Aorta (tissue), 5 donors: ENCODE measurements at regions of chr5 and their contacts with region 1.

Region 1: DNA sequence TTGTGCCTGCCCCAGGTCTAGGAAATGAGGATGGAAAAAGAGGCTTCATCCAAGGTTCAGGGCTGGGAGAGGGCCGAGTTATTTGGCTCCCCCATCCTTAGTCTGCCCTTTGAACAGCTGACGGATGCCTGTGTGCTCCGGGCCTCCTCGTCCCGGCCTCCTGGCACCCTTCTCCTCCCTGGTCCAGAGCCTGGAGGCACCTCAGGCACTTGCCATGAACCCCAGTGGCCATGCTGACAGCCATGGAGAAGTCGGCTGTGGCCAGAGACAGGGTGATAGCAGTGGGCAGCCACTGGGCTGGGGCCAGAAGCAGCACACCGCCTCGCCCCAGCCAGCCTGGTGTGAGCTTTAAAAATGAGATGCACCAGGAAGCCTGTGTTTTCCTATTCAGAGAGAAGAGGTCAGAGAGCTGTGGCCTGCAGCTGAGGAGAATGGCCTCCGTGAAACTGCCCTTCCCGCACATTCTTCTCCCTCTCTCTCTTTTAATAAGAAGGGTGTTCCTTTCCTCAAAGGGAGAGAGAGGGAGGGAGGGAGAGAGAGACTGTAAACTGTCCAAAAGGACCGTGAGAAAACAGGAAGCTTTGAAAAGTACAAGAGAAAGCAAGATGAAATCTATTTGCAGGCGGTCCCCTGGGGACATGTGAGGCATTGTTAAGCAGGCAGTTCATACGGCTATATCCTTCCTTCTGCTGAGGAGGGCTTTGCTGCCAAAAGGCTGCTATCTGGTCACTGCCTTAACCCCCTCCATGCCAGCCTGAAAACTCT is 55.3 kb downstream of the ZNF366 start:
- DNase-seq: peak; percentile 86 to 87
- ATAC-seq: peak; percentile 88
- H3K4me3 ChIP-seq: no peak overlapping the region
- H3K27ac ChIP-seq: peak overlapping the region; percentile 99
- H3K4me1 ChIP-seq: peaks cover 3 to 6% of the 10 kb centered on the region in 2 donors
- H3K27me3 ChIP-seq: no peaks in the 10 kb centered on the region

Region 2: GRCh38 chr5:72378636-72379290 is 73.2 kb before region 1 on chr5:
- intact Hi-C with region 1: loop called in 1 of 2 experiments (anchors 5 kb)
- DNase-seq: peak in 1 of 2 donors; percentile 68
- ATAC-seq: peak; percentile 55
- H3K4me3 ChIP-seq: no peak overlapping the region
- H3K27ac ChIP-seq: no peak overlapping the region
- H3K4me1 ChIP-seq: peaks cover 3 to 4% of the 10 kb centered on the region in 2 donors
- H3K27me3 ChIP-seq: no peaks in the 10 kb centered on the region

Region 3: DNA sequence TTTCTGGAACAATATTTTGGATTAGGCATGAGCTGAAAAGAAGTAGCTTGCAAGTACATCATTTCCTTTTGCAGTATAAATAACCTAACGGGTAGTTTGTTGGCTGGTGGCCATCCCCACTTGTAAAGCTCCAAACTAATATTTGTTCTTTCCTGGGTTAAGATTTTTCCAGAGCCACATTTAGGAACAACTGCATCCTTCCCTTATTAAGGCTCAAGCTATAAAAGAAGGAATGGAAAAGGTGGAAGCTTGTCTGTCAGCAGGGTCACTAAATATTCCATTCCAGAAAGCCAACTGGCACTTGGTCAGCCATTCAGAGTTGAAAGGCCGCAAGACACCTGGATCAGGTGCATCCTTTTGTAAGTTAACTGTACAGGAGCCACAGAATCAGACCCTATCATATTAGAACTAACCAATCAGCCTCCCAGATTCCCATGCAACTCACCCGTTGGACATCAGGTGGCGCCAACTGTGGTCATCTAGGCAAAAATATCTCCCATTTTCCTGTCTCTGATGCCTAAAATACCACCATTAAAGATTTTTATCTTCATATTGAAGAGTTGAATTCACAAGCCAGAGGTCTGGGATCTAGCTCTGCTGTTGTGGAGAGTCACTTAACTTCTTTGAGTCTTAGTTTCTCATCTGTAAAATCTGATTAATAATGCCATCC is 48.8 kb before region 1 on chr5:
- intact Hi-C with region 1: loop called in 1 of 2 experiments (anchors 5 kb)
- DNase-seq: peak in 1 of 2 donors; percentile 81
- ATAC-seq: peak; percentile 53
- H3K4me3 ChIP-seq: no peak overlapping the region
- H3K27ac ChIP-seq: peak overlapping the region; percentile 73 to 99
- H3K4me1 ChIP-seq: peaks cover 0 to 6% of the 10 kb centered on the region in 2 donors
- H3K27me3 ChIP-seq: no peaks in the 10 kb centered on the region

Region 4: DNA sequence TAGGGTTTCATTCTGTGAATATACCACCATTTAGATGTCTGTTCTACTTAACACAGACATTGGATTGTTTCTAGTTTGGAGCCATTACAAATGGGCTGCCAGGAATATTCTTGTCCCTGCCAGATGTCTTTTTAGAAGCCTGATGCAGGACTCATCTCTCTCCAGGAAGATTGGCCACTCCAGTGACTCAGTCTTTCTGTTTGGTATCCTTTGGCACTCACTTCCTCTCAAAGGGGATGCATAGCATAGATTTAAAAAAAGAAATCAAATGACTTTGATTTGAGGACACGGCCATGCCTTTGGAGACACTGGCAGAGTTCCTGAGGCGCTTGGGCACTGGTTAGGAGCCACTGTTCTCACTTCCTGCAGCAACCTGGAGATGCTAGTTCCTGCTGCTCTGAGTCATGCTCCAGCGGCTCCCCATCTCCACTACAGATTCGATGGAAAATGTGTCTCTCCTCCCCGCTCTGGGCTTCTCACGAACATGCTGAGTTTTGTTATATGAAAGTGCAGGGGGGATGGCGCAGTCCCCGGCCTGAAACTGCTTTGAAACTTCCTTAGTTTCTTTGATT is 58.8 kb after region 1 on chr5:
- intact Hi-C with region 1: loop called in 1 of 2 experiments (anchors 5 kb)
- DNase-seq: peak; percentile 85
- ATAC-seq: peak; percentile 61
- H3K4me3 ChIP-seq: no peak overlapping the region
- H3K27ac ChIP-seq: peak overlapping the region; percentile 46 to 67
- H3K4me1 ChIP-seq: peaks cover 0 to 1% of the 10 kb centered on the region in 2 donors
- H3K27me3 ChIP-seq: no peaks in the 10 kb centered on the region

Region 5: DNA sequence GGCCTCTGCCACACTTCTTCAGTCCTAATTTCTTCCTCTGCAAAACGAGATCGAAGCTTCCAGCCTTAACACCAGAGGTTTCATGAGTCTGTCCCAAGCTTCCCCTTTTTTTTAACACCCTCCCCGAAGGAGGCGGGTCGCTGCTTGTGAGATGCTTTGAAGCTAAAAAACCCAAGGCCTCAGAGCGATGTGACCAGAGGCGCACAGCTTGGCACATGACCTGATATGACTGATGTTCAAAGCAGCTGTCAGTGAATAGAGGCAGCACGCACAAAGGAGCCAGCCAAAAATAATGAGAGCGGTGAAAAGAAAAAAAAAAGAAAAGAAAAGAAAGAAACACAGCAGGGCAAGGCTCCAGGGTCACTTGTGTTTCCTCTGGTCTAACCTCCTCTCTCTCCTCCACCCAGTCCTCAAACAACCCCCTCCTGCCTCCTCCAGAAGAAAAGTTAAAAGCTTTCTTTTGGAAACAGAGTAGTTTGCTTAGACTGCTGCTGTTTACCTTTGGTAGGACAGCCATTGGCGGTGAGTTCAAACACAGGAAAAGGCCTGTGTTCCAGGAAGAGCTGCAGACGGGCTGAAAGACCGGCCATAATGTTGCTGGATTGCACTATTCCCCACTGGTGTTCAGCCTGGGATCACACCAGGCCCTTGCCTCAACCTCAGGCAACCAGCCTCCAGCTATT is 66.2 kb after region 1 on chr5:
- intact Hi-C with region 1: loop called (anchors 2 to 5 kb)
- DNase-seq: peak; percentile 84 to 88
- ATAC-seq: peak; percentile 62
- H3K4me3 ChIP-seq: no peak overlapping the region
- H3K27ac ChIP-seq: peak overlapping the region; percentile 47 to 83
- H3K4me1 ChIP-seq: peaks cover 3 to 7% of the 10 kb centered on the region in 2 donors
- H3K27me3 ChIP-seq: no peaks in the 10 kb centered on the region